OCI-LY7 (cell line): ENCODE measurements at regions of chr15 and their contacts with region 1.

Region 1: DNA sequence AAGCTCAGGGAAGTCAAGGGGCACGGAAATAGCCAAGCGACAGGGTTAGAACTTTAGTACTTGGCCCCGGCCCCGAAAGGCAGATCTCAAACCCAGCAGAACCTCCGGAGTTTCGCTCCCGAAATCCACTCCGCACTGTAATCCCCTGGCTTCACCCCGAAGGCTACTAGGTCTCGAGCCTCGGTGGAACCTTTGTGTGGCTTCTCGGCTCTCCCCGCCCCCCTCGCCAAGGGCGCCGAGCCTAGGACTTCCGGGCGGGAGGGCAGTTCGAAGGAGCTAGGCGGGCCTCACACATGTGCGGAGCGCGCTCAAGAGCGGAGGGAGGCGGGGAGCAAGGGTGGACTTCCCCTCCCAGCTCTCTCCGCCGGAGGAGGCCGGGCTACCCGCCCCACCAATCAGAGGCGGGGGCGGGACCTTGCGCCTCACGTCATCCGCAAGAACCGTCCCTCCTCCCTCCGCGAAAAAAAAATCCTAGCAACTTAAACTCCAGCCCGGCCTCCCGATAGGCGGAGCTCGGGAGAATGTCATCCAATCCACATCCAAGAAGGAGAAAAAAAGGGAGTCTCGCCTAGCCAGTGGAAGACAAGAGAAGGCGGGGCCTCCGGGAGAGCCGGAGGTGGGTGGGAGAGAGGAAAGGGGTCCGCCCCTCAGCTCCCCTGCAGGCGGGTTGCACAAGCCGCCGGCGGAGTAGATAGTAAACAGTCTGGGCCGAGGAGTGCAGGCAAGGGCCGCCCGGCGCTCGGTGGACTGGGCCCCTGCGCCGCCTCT is 2.4 kb upstream of the SIN3A start:
- DNase-seq: peak; percentile 100
- H3K4me3 ChIP-seq: peak overlapping the region; percentile 97
- H3K27ac ChIP-seq: peak overlapping the region; percentile 96
- H3K4me1 ChIP-seq: peaks cover 25% of the 10 kb centered on the region
- CTCF ChIP-seq: no peak

Region 2: DNA sequence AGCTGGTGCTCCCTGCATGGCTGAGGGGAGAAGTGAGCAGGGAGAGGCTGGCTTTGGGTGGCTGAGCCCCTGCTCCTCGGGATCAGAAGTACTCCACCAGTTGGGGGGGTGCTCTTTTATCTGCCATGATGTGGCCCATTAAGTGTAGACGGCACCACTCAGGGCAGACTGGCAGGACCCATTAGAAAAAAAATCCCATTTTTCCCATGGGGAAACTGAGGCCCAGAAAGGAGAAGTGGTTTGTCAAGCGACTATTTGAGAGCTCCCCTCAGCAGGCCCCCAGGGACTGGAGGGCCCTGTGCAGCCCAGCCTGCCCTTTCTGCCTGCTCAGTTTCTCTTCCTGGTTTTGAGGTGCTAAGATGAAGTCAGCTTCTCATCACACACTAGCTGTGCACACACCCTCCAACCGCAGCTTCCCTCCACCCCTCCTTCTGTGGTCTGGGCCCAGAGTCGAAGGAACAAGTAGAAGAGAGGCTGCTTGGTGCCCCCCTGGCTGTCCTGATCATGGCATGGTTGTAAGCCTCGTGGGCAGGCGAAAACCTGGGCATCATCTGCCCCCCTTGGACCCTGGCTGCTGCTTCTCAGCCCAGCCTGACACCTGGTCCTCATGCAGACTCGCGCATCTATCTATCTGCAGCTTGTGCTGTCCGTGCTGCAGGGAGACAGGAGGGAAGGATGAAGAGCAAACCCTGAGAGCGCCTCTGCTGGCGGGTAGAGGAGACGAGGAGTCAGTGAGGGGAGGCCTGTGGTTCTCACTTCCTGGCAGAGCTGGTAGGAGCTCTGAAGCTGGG is 666.4 kb before region 1 on chr15:
- CTCF ChIA-PET with region 1: no interaction called
- POLR2A ChIA-PET with region 1: no interaction called
- intact Hi-C with region 1: loop called (anchors 5 kb)
- DNase-seq: peak; percentile 97
- H3K4me3 ChIP-seq: peak overlapping the region; percentile 97
- H3K27ac ChIP-seq: peak overlapping the region; percentile 99
- H3K4me1 ChIP-seq: peaks cover 86% of the 10 kb centered on the region
- CTCF ChIP-seq: peak; percentile 91

Region 3: GRCh38 chr15:75347222-75347878 is 106.5 kb before region 1 on chr15:
- CTCF ChIA-PET with region 1: interaction called, 4 read pairs
- POLR2A ChIA-PET with region 1: no interaction called
- intact Hi-C with region 1: loop called (anchors 1 kb)
- DNase-seq: peak; percentile 96
- H3K4me3 ChIP-seq: peak overlapping the region; percentile 88
- H3K27ac ChIP-seq: peak overlapping the region; percentile 89
- H3K4me1 ChIP-seq: peaks cover 50% of the 10 kb centered on the region
- CTCF ChIP-seq: no peak

Region 4: GRCh38 chr15:75431682-75432081 is 22.2 kb before region 1 on chr15:
- CTCF ChIA-PET with region 1: no interaction called
- POLR2A ChIA-PET with region 1: interaction called, 13 read pairs
- intact Hi-C with region 1: no loop called
- DNase-seq: no peak
- H3K4me3 ChIP-seq: no peak overlapping the region
- H3K27ac ChIP-seq: no peak overlapping the region
- H3K4me1 ChIP-seq: no peaks in the 10 kb centered on the region
- CTCF ChIP-seq: no peak

Region 5: GRCh38 chr15:75578948-75579920 is 125.3 kb after region 1 on chr15 and contains the start of gene PTPN9:
- CTCF ChIA-PET with region 1: no interaction called
- POLR2A ChIA-PET with region 1: interaction called, 8 read pairs
- intact Hi-C with region 1: loop called (anchors 2 kb)
- DNase-seq: peak; percentile 87
- H3K4me3 ChIP-seq: peak within 1 kb of the TSS; percentile 88
- H3K27ac ChIP-seq: peak within 1 kb of the TSS; percentile 71
- H3K4me1 ChIP-seq: peaks cover 14% of the 10 kb centered on the region
- CTCF ChIP-seq: peak; percentile 66
- total RNA-seq, gene PTPN9: 12.5 and 16.5 TPM in 2 replicates

Region 6: DNA sequence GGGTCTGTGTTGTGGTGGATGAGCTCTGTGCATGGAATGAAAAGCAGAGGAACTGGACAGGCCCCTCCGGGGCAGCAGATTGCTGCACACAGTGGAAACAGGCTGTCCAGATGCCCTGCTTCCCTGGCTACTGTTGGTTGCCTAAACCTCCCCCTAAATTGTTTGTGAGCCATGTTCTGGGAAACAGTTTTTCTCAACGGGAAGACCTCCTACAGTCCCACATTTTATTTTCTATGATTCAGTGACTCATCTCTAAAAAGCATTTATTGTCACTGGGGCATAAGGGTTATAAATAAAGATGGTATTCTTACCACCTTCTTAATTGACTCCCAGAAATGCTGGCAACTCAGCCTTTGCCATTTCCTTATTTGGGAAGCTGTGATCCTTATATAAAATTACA is 145.5 kb after region 1 on chr15:
- CTCF ChIA-PET with region 1: no interaction called
- POLR2A ChIA-PET with region 1: no interaction called
- intact Hi-C with region 1: no loop called
- DNase-seq: no peak
- H3K4me3 ChIP-seq: no peak overlapping the region
- H3K27ac ChIP-seq: no peak overlapping the region
- H3K4me1 ChIP-seq: no peaks in the 10 kb centered on the region
- CTCF ChIP-seq: no peak

Region 7: GRCh38 chr15:75639709-75640482 is 186.0 kb after region 1 on chr15 and contains the start of gene IMP3:
- CTCF ChIA-PET with region 1: no interaction called
- POLR2A ChIA-PET with region 1: interaction called, 19 read pairs
- intact Hi-C with region 1: loop called (anchors 2 kb)
- DNase-seq: peak; percentile 98
- H3K4me3 ChIP-seq: peak within 1 kb of the TSS; percentile 89
- H3K27ac ChIP-seq: peak within 1 kb of the TSS; percentile 85
- H3K4me1 ChIP-seq: peaks cover 39% of the 10 kb centered on the region
- CTCF ChIP-seq: no peak
- total RNA-seq, gene IMP3: 135 and 174 TPM in 2 replicates